K562 (cell line): ENCODE measurements at regions of chr18 and their contacts with region 1.

Region 1: GRCh38 chr18:9334329-9334972 is at the start of gene TWSG1:
- DNase-seq: peak; percentile 97 to 100 (median 100)
- ATAC-seq: peak; percentile 97
- H3K4me3 ChIP-seq: peak within 1 kb of the TSS; percentile 79
- H3K27ac ChIP-seq: peak within 1 kb of the TSS; percentile 77
- H3K4me1 ChIP-seq: peaks cover 18% of the 10 kb centered on the region in 2 experiments
- H3K27me3 ChIP-seq: no peaks in the 10 kb centered on the region
- CTCF ChIP-seq: peak in 2 of 3 experiments; percentile 53 to 69; a peak in 4 of 6 replicates
- EP300 ChIP-seq: no peak
- POLR2A ChIP-seq: peak; percentile 67
- RAD21 ChIP-seq: no peak
- polyA plus RNA-seq, gene TWSG1: 10.4 to 11.3 TPM

Region 2: DNA sequence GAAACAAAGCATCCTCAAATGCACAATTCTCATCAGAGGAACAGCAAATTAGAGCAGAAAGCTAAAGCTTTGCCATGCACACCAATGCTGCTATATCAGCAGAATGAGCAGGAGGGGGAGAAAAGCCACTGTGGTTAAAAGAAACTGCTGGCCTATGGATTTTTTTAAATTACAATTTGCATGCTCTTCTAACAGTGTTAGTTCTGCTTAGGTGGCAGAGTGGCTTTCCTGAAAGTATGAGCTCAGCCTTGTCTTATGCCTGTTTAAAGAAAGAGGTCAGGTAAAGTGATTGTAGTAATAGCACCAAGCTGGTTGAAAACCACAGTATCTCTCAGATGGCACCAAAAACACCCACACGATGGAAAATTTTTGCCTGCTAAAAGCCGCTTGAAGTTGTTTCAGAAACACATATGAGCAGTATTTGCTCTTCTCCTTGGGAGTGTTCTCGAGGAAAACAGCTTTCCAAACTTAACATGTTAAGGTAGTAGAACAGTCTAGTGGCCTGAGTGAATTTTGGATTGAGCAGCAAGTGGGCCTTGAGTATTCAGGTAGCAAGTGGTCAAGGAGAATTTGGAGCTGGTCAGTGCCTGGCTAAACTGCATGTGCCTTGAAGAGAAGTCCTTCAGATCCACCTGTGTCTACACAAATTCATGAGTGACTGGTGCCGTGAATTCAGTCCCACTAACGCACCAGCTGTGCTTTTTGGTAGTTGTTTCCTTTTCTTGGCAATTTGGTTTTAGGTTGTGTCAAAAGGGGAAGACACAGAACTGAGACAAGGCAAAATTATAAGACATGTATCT is 251.5 kb before region 1 on chr18:
- CTCF ChIA-PET with region 1: no interaction called
- POLR2A ChIA-PET with region 1: no interaction called
- in situ Hi-C with region 1: loop called (anchors 10 kb)
- intact Hi-C with region 1: loop called (anchors 10 kb)
- DNase-seq: no peak
- ATAC-seq: peak; percentile 26; the same call in 2 of the 3 replicates
- H3K4me3 ChIP-seq: no peak overlapping the region
- H3K27ac ChIP-seq: no peak overlapping the region
- H3K4me1 ChIP-seq: no peaks in the 10 kb centered on the region; a peak in 2 of 5 replicates
- H3K27me3 ChIP-seq: no peaks in the 10 kb centered on the region
- CTCF ChIP-seq: no peak
- EP300 ChIP-seq: no peak
- POLR2A ChIP-seq: no peak
- RAD21 ChIP-seq: no peak

Region 3: GRCh38 chr18:9433671-9434121 is 99.2 kb after region 1 on chr18:
- CTCF ChIA-PET with region 1: no interaction called
- POLR2A ChIA-PET with region 1: no interaction called
- in situ Hi-C with region 1: no loop called
- intact Hi-C with region 1: no loop called
- DNase-seq: no peak
- ATAC-seq: peak; percentile 24; the same call in 2 of the 3 replicates
- H3K4me3 ChIP-seq: no peak overlapping the region
- H3K27ac ChIP-seq: no peak overlapping the region
- H3K4me1 ChIP-seq: peaks cover 4 to 5% of the 10 kb centered on the region in 2 experiments; a peak in 2 of 5 replicates
- H3K27me3 ChIP-seq: no peaks in the 10 kb centered on the region
- CTCF ChIP-seq: no peak
- EP300 ChIP-seq: no peak
- POLR2A ChIP-seq: no peak
- RAD21 ChIP-seq: no peak